WTC11 (cell line): ENCODE measurements at regions of chr2 and their contacts with region 1.

Region 1: GRCh38 chr2:71157124-71157793 is 26.8 kb downstream of the MPHOSPH10 start:
- DNase-seq: peak; percentile 91
- ATAC-seq: peak; percentile 89
- H3K4me3 Mint-ChIP-seq: peak overlapping the region; percentile 13; the same call in 1 of the 2 replicates
- H3K27ac Mint-ChIP-seq: no peak overlapping the region
- H3K4me1 Mint-ChIP-seq: peaks cover 14% of the 10 kb centered on the region
- H3K27me3 Mint-ChIP-seq: no peaks in the 10 kb centered on the region; the same call in 1 of the 2 replicates
- CTCF ChIP-seq: peak; percentile 90

Region 2: DNA sequence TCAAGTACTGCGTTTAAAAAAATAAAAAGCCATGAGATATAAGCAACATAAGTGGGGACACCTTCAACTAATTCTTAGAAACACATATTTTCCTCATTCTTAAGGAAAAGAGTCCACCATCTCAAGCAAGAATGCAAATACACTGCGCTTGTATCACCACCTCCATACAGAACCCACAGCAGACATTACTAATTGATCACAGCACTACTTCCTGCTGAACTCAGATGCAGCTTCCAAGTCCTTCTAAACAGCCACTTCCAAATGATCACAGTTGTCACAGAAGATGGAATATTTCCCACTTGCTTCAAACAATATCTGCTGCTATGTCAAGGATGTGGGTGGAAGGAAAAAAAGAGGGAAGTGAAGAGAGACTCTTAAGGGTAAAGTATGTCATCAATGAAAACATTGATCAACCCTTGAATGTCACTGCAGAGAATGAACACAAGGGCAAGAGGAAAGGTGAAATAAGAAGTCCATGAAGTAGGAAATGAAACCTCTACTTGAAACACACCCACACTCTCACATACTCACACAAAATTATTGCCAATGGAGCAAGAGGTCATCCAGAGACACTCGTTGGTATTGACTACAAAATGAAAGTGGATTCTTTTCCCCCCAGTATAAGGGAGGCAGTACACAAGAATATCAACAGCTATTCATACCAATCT is 625.7 kb before region 1 on chr2:
- CTCF ChIA-PET with region 1: no interaction called
- POLR2A ChIA-PET with region 1: no interaction called
- DNase-seq: no peak
- ATAC-seq: no peak
- H3K4me3 Mint-ChIP-seq: no peak overlapping the region
- H3K27ac Mint-ChIP-seq: no peak overlapping the region
- H3K4me1 Mint-ChIP-seq: 0 out of 2 replicates have a peak, but pooled peaks cover 2% of the 10 kb centered on the region
- H3K27me3 Mint-ChIP-seq: peaks cover 12% of the 10 kb centered on the region
- CTCF ChIP-seq: no peak

Region 3: GRCh38 chr2:71043531-71044407 is 113.5 kb before region 1 on chr2:
- CTCF ChIA-PET with region 1: no interaction called
- POLR2A ChIA-PET with region 1: no interaction called
- DNase-seq: no peak
- ATAC-seq: no peak
- H3K4me3 Mint-ChIP-seq: no peak overlapping the region
- H3K27ac Mint-ChIP-seq: no peak overlapping the region
- H3K4me1 Mint-ChIP-seq: no peaks in the 10 kb centered on the region
- H3K27me3 Mint-ChIP-seq: peaks cover 6% of the 10 kb centered on the region; the same call in 1 of the 2 replicates
- CTCF ChIP-seq: no peak

Region 4: DNA sequence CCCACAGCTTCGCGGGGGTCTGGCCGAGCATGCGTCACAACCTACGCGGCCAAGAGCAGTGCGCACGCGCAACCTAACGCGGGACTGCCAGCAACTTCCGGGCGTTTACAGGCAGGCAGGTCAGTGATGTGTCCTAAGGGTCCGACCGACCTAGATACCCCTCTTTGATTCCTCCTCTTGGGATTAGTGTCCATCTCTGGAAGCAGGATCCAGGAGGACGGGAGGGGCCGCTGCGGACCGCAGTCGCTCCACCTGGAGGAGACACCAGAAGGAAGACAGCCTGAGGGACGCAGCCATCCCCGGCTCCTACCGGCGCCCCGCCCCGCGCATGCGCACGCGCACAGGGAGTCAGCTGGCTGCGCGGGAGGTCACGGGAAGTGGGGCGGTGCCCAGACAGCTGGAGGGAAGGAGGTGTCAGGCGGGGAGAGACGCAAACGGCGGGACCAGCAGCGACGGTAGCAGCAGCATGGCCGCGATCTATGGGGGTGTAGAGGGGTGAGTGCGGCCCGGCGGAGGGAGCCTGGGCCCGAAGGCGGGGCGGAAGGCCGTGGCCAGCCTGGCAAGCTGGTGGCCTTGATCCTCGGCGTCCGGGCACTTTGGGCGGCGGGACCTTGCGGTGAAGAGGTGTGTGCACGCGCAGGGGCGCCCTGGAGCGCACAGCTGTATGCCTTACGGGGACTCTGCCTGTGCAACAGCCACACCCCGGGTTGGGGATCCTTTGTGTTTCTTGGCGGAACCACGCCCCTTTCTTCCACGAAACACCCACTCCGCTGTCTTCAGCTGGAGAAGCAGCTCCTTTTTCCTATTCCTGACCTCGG is 88.8 kb before region 1 on chr2 and contains the start of gene NAGK:
- CTCF ChIA-PET with region 1: interaction called, 35 read pairs
- POLR2A ChIA-PET with region 1: no interaction called
- DNase-seq: peak; percentile 96
- ATAC-seq: peak; percentile 83
- H3K4me3 Mint-ChIP-seq: peak within 1 kb of the TSS; percentile 97
- H3K27ac Mint-ChIP-seq: peak within 1 kb of the TSS; percentile 98
- H3K4me1 Mint-ChIP-seq: peaks cover 32% of the 10 kb centered on the region
- H3K27me3 Mint-ChIP-seq: peaks cover 2% of the 10 kb centered on the region; the same call in 1 of the 2 replicates
- CTCF ChIP-seq: no peak
- total RNA-seq, gene NAGK: 56.1 to 58.9 TPM (median 57.7 TPM) in 3 replicates

Region 5: DNA sequence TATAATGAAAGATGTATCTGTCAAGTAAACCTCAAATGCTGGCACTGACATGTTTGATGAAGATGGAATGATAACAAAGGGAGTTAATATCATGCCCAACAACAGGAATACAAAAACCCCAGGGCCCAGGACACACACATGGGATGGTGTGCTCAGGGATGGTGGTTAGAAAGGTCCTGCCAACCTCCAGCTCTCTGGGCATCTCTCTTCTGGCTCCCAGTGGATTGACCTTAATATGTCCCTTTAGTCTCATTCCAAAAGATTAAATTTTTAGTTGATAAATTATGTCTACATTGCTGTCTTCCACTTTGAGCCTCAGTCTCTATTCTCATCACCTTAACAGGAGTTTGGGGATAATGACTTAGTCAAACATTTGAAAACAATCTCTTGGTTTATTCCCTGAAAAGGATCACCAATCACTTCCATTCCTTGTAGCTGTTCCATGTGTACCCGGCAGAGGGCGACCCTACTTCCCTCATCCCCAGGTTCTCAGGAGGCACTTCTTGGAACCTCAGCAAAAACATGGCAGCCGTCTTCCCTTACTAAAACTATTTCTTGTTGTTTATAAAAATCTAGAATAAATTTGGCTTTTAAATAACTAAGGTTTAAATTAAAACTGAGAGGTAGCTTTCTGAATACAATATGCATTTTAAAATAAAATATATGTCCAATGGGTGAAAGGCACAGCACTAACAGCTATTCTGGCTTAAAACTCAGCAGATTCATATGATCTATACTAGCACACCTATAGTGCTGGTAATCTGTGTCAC is 56.9 kb before region 1 on chr2:
- CTCF ChIA-PET with region 1: interaction called, 23 read pairs
- POLR2A ChIA-PET with region 1: no interaction called
- DNase-seq: peak; percentile 72
- ATAC-seq: peak; percentile 63
- H3K4me3 Mint-ChIP-seq: no peak overlapping the region
- H3K27ac Mint-ChIP-seq: no peak overlapping the region
- H3K4me1 Mint-ChIP-seq: peaks cover 29% of the 10 kb centered on the region
- H3K27me3 Mint-ChIP-seq: no peaks in the 10 kb centered on the region
- CTCF ChIP-seq: peak; percentile 59

Region 6: GRCh38 chr2:71187589-71187988 is 30.3 kb after region 1 on chr2:
- CTCF ChIA-PET with region 1: interaction called, 15 read pairs
- POLR2A ChIA-PET with region 1: no interaction called
- DNase-seq: no peak
- ATAC-seq: no peak
- H3K4me3 Mint-ChIP-seq: no peak overlapping the region
- H3K27ac Mint-ChIP-seq: no peak overlapping the region
- H3K4me1 Mint-ChIP-seq: peaks cover 42% of the 10 kb centered on the region
- H3K27me3 Mint-ChIP-seq: no peaks in the 10 kb centered on the region
- CTCF ChIP-seq: no peak

Region 7: GRCh38 chr2:71226965-71227560 is 69.8 kb after region 1 on chr2 and contains the start of gene PAIP2B:
- CTCF ChIA-PET with region 1: interaction called, 13 read pairs
- POLR2A ChIA-PET with region 1: interaction called, 4 read pairs
- DNase-seq: peak; percentile 99
- ATAC-seq: peak; percentile 97
- H3K4me3 Mint-ChIP-seq: peak within 1 kb of the TSS; percentile 98
- H3K27ac Mint-ChIP-seq: peak within 1 kb of the TSS; percentile 96
- H3K4me1 Mint-ChIP-seq: peaks cover 12% of the 10 kb centered on the region
- H3K27me3 Mint-ChIP-seq: peaks cover 8% of the 10 kb centered on the region; the same call in 1 of the 2 replicates
- CTCF ChIP-seq: no peak
- total RNA-seq, gene PAIP2B: 19.3 to 22.4 TPM (median 22.2 TPM) in 3 replicates

Region 8: GRCh38 chr2:71282495-71282894 is 125.2 kb after region 1 on chr2:
- CTCF ChIA-PET with region 1: interaction called, 10 read pairs
- POLR2A ChIA-PET with region 1: no interaction called
- DNase-seq: no peak
- ATAC-seq: peak; percentile 75
- H3K4me3 Mint-ChIP-seq: no peak overlapping the region
- H3K27ac Mint-ChIP-seq: no peak overlapping the region
- H3K4me1 Mint-ChIP-seq: peaks cover 40% of the 10 kb centered on the region
- H3K27me3 Mint-ChIP-seq: peaks cover 4% of the 10 kb centered on the region
- CTCF ChIP-seq: no peak

Region 9: DNA sequence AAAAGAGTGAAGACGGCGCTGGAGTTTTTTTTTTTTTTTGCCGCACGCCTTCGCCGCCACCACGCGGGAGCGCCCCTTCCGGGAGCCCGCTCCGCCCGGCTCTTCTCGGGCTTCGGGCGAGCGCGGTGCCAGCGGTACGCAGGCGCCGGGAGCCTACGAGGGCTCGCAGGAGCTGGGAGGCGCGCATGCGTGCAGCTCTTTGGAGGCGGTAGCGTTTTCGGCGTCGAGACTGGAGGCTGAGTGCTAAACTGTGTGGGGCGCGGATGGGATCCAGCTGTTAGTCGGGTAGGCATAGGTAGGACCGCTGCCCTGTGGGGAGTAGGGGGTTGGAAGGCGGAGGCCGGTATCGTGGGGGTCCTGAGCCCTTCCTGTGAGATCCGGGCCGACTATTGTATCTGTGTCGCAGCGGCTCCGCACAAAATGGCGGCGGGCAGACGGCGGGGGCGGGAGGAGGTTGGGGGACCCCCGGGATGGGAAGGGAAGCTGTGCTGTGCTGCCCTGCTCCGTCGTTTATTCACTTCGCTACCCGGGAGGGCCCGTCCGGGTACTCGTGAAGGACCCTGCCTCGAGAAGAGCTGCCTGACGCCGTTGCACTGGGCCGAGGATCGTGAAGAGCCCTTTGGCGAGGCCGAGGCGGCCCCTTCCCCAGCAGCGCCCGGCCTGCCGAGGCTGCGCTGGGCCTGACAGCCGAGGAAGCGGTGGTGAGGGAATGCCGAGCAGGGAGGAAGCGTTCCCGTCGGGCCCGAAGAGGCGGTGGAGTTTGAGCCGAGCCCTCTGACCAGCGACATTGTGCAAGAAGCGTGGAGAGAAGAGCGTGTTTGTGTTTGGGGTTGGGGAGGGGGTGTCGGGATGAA is 174.5 kb after region 1 on chr2 and contains the start of gene ZNF638:
- CTCF ChIA-PET with region 1: interaction called, 22 read pairs
- POLR2A ChIA-PET with region 1: no interaction called
- DNase-seq: peak; percentile 91
- ATAC-seq: peak; percentile 92
- H3K4me3 Mint-ChIP-seq: peak within 1 kb of the TSS; percentile 99
- H3K27ac Mint-ChIP-seq: peak within 1 kb of the TSS; percentile 100
- H3K4me1 Mint-ChIP-seq: peaks cover 37% of the 10 kb centered on the region
- H3K27me3 Mint-ChIP-seq: no peaks in the 10 kb centered on the region
- CTCF ChIP-seq: peak; percentile 62; the same call in 1 of the 2 replicates
- total RNA-seq, gene ZNF638: 109 to 131 TPM (median 128 TPM) in 3 replicates